AG04449 (cell line): ENCODE measurements at regions of chr4 and their contacts with region 1.

Region 1: DNA sequence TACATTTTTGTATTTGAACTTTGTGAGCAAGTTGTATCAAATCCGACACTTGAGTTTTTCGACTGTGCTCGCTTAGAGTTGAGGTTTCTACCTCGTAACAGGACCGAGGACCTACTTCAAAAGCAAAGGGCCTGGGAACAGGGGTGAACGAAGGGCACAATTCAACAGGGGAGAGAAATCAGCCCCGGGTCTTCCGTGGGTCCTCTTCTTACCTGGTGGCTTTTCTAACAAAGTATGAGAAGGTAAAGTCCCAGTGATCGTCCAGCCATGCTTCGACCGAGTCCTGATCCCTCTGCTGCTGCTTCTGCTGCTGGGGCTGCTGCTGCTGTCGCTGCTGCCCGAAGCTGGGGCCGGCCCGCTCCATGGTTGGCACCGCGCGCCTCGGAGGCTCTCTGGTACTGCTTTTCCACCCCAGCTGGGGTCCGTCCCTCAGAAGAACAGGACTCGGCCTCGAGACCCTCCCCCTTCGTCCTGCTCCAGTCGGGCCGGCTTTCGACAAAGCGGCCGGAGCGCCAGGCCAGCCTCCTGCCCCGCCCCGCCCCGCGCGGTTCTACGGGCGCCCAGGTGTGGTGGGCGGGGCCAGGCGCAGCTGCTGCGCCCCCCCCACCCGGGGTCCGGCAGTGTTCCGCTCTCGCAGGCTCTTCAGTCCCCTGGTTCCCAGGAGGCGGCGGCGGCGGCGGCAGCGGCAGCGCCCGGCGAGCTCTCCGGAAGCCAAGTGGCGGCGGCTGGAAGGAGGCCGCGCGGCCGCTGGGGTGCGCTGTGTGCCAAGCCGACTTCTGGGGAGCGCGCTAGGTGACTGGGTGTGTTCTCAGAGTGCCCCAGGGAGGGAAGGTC is at the start of gene PDE5A:
- DNase-seq: no peak
- H3K4me3 ChIP-seq: peak within 1 kb of the TSS; percentile 88
- CTCF ChIP-seq: peak; percentile 88

Region 2: DNA sequence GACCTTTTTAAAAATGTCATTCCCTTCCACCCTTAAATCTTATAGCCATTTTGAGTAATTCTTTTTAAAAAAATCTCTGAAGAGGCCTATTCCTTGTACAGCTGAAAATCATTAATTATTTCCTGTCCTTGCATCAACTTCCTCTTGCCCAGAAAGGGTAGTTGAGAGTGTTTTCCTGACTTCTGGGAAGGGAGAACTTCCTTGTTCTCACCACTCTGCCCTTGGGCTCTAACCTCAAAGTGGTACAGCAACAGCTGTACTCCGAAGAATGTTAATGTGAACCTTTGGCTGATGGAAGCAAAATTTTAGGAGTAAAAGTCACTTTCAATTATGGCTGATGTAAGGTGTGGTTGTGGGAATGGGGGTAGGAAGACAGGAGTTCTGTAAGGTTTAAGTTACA is 291.5 kb before region 1 on chr4:
- CTCF ChIA-PET with region 1: no interaction called
- POLR2A ChIA-PET with region 1: no interaction called
- DNase-seq: no peak
- H3K4me3 ChIP-seq: no peak overlapping the region
- CTCF ChIP-seq: no peak

Region 3: GRCh38 chr4:119559044-119559647 is 69.4 kb before region 1 on chr4:
- CTCF ChIA-PET with region 1: interaction called, 47 read pairs
- POLR2A ChIA-PET with region 1: no interaction called
- DNase-seq: no peak
- H3K4me3 ChIP-seq: no peak overlapping the region
- CTCF ChIP-seq: no peak

Region 4: GRCh38 chr4:119653990-119654389 is 25.5 kb after region 1 on chr4:
- CTCF ChIA-PET with region 1: interaction called, 12 read pairs
- POLR2A ChIA-PET with region 1: no interaction called
- DNase-seq: no peak
- H3K4me3 ChIP-seq: no peak overlapping the region
- CTCF ChIP-seq: no peak

Region 5: GRCh38 chr4:119735165-119735651 is 106.7 kb after region 1 on chr4:
- CTCF ChIA-PET with region 1: interaction called, 22 read pairs
- POLR2A ChIA-PET with region 1: no interaction called
- DNase-seq: peak; percentile 93
- H3K4me3 ChIP-seq: no peak overlapping the region
- CTCF ChIP-seq: no peak

Region 6: GRCh38 chr4:119765936-119766335 is 137.4 kb after region 1 on chr4:
- CTCF ChIA-PET with region 1: interaction called, 11 read pairs
- POLR2A ChIA-PET with region 1: no interaction called
- DNase-seq: no peak
- H3K4me3 ChIP-seq: no peak overlapping the region
- CTCF ChIP-seq: no peak

Region 7: DNA sequence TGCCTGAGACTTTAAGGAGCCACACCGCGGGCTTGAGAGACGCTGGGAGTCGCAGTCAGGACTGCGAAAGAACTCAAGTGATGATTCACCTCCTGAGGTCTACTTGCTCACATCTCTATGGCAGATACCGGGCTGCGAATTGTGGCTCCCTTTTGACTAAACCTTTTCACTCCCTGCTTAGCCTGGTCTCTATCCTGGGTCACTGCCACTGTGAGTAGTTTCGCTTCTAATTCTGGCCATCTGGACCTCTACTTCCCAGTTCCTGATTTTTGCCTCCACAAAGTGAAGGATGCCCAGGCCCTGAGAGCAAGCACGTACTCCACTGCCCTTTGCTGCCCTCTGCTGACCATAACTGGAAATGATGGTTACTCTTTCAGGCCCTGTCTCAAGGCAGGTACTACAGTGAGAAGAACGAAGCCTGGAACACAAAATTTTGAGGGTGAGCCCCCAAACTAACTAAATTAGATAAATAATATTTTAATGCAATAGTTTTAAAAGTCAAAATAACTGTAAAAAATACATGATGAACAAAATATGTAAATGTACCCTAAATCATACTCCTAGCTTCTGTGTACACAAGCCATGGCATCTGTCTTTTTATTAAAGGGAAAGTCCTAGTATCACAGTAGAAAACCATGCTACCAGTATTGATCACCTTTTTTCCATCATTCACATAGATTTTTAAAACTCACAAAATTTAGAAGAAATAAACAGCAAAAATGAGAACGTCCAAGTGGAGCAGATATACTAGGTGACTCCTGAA is 421.4 kb after region 1 on chr4:
- CTCF ChIA-PET with region 1: interaction called, 159 read pairs
- POLR2A ChIA-PET with region 1: no interaction called
- DNase-seq: no peak
- H3K4me3 ChIP-seq: peak overlapping the region; percentile 52
- CTCF ChIP-seq: peak; percentile 86

Region 8: GRCh38 chr4:120062663-120063195 is 434.2 kb after region 1 on chr4:
- CTCF ChIA-PET with region 1: interaction called, 159 read pairs
- POLR2A ChIA-PET with region 1: no interaction called
- DNase-seq: no peak
- H3K4me3 ChIP-seq: no peak overlapping the region
- CTCF ChIP-seq: no peak